Vagina (tissue), 2 donors: ENCODE measurements at regions of chr6 and their contacts with region 1.

Region 1: DNA sequence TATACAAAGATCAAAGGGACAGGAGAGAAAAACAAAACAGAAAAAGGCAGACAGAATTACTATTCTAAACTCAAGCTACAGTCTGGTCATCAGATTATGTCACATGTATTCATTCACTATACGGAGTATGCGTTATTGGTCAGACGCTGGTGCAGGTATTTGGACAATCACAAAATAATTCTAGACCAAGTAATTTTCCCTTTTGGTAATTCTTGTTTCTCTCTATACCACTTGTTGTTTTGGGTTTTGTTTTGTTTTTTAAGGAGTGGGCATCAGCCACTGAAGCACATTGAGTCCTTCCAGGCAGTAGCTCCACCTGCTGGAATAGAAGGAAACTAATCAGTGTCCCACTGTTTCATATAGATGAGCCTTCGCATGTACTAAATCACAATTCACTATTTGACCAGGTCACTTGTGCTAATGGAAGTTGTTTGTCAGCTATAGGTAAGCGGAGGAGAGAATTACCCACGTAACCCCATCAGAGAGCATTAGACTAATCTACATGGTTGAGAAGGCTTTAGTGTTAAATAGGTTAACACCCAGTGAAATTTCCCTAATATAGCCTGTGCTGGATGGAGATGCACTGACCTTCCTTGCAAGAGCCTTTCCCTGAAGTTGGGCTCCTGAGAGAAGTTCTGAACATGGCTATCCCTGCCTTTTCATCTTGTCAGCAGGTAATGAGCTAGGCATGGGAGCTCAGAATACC is 77.9 kb downstream of the TNFAIP3 start:
- DNase-seq: no peak
- H3K4me3 ChIP-seq: peak overlapping the region in 1 of 2 donors; percentile 4
- H3K27ac ChIP-seq: no peak overlapping the region
- H3K4me1 ChIP-seq: no peaks in the 10 kb centered on the region
- H3K27me3 ChIP-seq: no peaks in the 10 kb centered on the region
- CTCF ChIP-seq: peak; percentile 61 to 80 (median 66)
- POLR2A ChIP-seq: no peak

Region 2: GRCh38 chr6:137700751-137701477 is 244.0 kb before region 1 on chr6:
- intact Hi-C with region 1: loop called (anchors 5 kb)
- DNase-seq: no peak
- H3K4me3 ChIP-seq: no peak overlapping the region
- H3K27ac ChIP-seq: no peak overlapping the region
- H3K4me1 ChIP-seq: peaks cover 21% of the 10 kb centered on the region
- H3K27me3 ChIP-seq: no peaks in the 10 kb centered on the region
- CTCF ChIP-seq: no peak
- POLR2A ChIP-seq: no peak